Heart right ventricle (tissue), 16 donors: ENCODE measurements at regions of chr9 and their contacts with region 1.

Region 1: DNA sequence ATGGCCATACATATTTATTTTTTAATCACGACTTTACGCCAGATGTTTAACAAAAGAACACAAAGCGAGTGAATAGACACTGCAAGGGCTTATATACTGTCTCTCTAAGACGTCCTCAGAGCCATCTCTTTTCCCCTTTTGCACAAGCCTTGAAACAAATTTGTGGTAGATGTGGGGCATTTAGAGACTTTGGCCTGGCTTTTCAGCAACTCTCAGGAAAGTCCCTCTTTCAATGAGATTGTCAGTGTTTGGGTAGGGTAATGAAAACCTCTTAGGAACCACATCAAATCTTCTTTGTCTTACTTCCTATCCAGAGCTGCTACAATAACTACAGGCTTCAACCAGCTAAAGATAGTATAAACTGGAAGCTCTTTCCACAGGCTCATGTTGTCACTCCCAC is 380.0 kb downstream of the ANXA1 start:
- DNase-seq: no peak
- ATAC-seq: no peak
- H3K4me3 ChIP-seq: no peak overlapping the region
- H3K27ac ChIP-seq: no peak overlapping the region
- H3K4me1 ChIP-seq: no peaks in the 10 kb centered on the region
- H3K27me3 ChIP-seq: no peaks in the 10 kb centered on the region
- CTCF ChIP-seq: no peak

Region 2: DNA sequence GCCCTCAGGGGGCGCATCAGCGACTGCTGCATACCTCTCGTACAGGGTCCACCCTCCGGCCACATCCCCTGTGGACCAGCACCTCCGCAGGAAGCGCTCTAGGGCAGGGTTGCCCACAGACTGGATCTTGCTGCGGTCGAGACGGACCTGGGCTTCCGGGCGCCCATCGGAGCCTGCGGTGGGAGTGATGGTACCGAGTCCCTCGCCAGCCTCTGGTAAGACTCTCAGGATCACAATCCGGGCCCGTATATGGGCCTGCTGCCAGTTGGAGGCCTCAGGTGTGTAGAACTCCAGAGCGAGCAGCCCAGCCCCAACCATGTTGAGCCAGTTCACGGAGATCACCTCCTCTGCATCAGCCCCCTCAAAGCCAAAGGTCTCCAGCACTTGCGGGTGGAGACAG is 57.0 kb before region 1 on chr9:
- intact Hi-C with region 1: loop called in 1 of 10 experiments (anchors 10 kb)
- DNase-seq: no peak
- ATAC-seq: peak in 4 of 8 donors; percentile 17 to 51 (median 33)
- H3K4me3 ChIP-seq: no peak overlapping the region
- H3K27ac ChIP-seq: no peak overlapping the region
- H3K4me1 ChIP-seq: peaks cover 0 to 8% (median 0%) of the 10 kb centered on the region in 9 donors
- H3K27me3 ChIP-seq: no peaks in the 10 kb centered on the region
- CTCF ChIP-seq: no peak